Mucosa of descending colon (tissue), 3 donors: ENCODE measurements at regions of chr3 and their contacts with region 1.

Region 1: DNA sequence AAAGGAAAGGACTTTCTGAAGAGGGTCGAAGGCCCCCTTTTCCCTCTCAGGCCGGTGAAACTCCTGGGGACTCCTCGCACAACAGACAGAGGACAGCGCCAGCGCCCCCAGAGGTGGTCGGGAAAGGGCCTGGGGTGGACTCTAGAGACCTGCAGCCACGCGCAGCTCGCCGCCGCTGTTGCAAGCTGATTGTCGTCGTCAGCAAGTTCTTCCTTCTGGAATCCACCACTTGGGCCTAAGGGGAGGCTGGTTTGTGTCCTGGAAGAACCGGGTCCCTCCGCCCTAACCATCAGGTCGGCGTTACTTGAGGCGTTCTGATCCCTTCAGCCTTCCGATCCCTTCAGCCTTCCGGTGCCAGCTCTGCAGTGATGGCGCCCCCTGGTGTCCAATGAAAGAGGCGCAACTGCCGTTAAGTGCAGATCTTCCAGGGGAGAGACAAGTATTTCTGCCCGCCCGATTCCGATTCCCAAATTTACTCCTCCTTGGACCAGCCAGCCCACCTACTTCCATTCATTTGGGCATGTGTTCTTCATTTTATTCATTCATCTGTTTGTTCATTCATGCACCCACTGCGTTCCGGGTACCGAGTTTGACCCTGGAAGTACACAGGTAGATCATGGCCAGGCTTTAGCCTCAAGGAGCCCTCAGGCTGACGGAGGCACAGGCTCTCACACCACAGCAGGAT is 77.2 kb upstream of the SLC6A11 start:
- DNase-seq: peak in 2 of 3 donors; percentile 74 to 77
- ATAC-seq: peak; percentile 72
- H3K4me3 ChIP-seq: no peak overlapping the region
- H3K4me1 ChIP-seq: no peaks in the 10 kb centered on the region
- CTCF ChIP-seq: peak; percentile 74

Region 2: GRCh38 chr3:10344147-10344943 is 394.5 kb before region 1 on chr3:
- intact Hi-C with region 1: loop called (anchors 5 to 10 kb)
- DNase-seq: peak in 2 of 3 donors; percentile 48 to 63
- ATAC-seq: peak; percentile 27
- H3K4me3 ChIP-seq: no peak overlapping the region
- H3K4me1 ChIP-seq: no peaks in the 10 kb centered on the region
- CTCF ChIP-seq: peak; percentile 77

Region 3: GRCh38 chr3:10349801-10350200 is 389.0 kb before region 1 on chr3:
- intact Hi-C with region 1: loop called (anchors 5 to 10 kb)
- DNase-seq: no peak
- ATAC-seq: no peak
- H3K4me3 ChIP-seq: no peak overlapping the region
- H3K4me1 ChIP-seq: no peaks in the 10 kb centered on the region
- CTCF ChIP-seq: no peak